ENCODE measurements at regions of chr13 and their contacts with region 1.

Region 1: DNA sequence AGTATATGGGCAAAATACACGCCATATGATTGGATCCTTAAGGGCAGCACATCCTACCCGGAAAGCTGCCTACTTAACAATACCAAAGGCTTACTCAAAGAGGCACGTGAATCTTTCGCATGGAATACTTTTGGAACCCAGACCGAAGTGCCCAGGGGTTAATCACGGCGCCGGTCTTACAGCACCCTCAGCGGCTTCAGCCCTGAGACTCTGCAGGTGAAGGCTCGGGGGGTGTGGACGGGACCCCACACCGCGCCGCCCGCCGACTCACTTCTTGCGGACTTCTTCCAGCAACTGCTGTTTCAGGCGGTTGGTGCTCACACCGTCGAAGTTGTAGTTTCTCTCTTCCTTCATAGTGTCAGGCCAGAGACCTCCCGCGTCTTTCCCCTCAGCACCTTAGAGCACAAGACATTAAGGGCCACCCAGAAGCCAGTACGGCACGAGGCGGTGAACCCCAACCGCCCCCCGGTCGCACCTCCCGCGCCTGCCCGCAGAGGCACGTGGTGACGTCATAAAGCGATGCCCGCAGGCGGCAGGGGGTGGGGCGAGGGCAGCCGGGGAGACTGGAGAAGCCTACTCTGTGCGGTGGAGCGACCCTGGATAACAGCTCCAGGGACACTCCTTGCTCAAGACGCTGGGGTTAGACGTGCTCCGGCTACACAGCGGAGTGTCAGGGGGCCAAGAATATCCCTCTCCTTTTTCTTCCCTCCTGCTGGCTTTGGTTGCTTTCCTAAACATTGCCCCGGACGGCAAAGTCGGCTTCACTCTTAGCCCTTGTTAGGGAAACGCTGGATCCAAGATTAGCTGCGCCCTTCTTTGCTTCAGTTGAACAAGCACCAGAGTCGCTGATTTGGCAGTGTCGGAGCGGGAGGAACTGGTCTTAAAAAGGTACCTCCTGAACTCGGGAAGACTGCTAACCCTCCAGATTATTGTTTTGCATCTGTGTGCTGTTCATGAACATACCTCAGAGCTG is at the start of gene CCDC169:
- DNase-seq: peak; percentile 83
- H3K4me3 ChIP-seq: peak within 1 kb of the TSS; percentile 81
- H3K27ac ChIP-seq: peak within 1 kb of the TSS; percentile 51
- H3K4me1 ChIP-seq: peaks cover 6% of the 10 kb centered on the region; the same call in 1 of the 2 replicates
- H3K27me3 ChIP-seq: no peaks in the 10 kb centered on the region
- total RNA-seq, gene CCDC169: 0.22 and 0.25 TPM in 2 replicates

Region 2: GRCh38 chr13:36405151-36405550 is 107.5 kb after region 1 on chr13:
- in situ Hi-C with region 1: loop called (anchors 10 kb)
- DNase-seq: no peak
- H3K4me3 ChIP-seq: no peak overlapping the region
- H3K27ac ChIP-seq: no peak overlapping the region
- H3K4me1 ChIP-seq: no peaks in the 10 kb centered on the region
- H3K27me3 ChIP-seq: peaks cover 15% of the 10 kb centered on the region; the same call in 1 of the 2 replicates

Region 3: GRCh38 chr13:36736119-36736726 is 438.6 kb after region 1 on chr13:
- in situ Hi-C with region 1: loop called (anchors 25 kb)
- DNase-seq: peak; percentile 83
- H3K4me3 ChIP-seq: no peak overlapping the region
- H3K27ac ChIP-seq: no peak overlapping the region
- H3K4me1 ChIP-seq: no peaks in the 10 kb centered on the region
- H3K27me3 ChIP-seq: no peaks in the 10 kb centered on the region; the same call in 1 of the 2 replicates

Measured in GM23248 (cell line).